MCF 10A (cell line): ENCODE measurements at regions of chr12 and their contacts with region 1.

Region 1: GRCh38 chr12:119988782-119989668 is at the start of gene BICDL1:
- DNase-seq: peak; percentile 93
- H3K4me3 Mint-ChIP-seq: peak within 1 kb of the TSS; percentile 75
- H3K27ac Mint-ChIP-seq: peak within 1 kb of the TSS; percentile 72
- H3K4me1 Mint-ChIP-seq: peaks cover 13% of the 10 kb centered on the region
- H3K27me3 Mint-ChIP-seq: peaks cover 2% of the 10 kb centered on the region
- CTCF ChIP-seq: no peak
- total RNA-seq, gene BICDL1: 18.4 and 20.7 TPM in 2 replicates

Region 2: GRCh38 chr12:119877639-119877948 is 111.4 kb before region 1 on chr12:
- CTCF ChIA-PET with region 1: no interaction called
- POLR2A ChIA-PET with region 1: no interaction called
- intact Hi-C with region 1: no loop called
- DNase-seq: no peak
- H3K4me3 Mint-ChIP-seq: peak overlapping the region; percentile 82
- H3K27ac Mint-ChIP-seq: peak overlapping the region; percentile 85
- H3K4me1 Mint-ChIP-seq: peaks cover 9% of the 10 kb centered on the region
- H3K27me3 Mint-ChIP-seq: no peaks in the 10 kb centered on the region
- CTCF ChIP-seq: no peak

Region 3: GRCh38 chr12:120012067-120012621 is 23.1 kb after region 1 on chr12:
- CTCF ChIA-PET with region 1: interaction called, 5 read pairs
- POLR2A ChIA-PET with region 1: interaction called, 25 read pairs
- intact Hi-C with region 1: no loop called
- DNase-seq: peak; percentile 7
- H3K4me3 Mint-ChIP-seq: no peak overlapping the region
- H3K27ac Mint-ChIP-seq: no peak overlapping the region
- H3K4me1 Mint-ChIP-seq: peaks cover 7% of the 10 kb centered on the region
- H3K27me3 Mint-ChIP-seq: no peaks in the 10 kb centered on the region
- CTCF ChIP-seq: no peak

Region 4: DNA sequence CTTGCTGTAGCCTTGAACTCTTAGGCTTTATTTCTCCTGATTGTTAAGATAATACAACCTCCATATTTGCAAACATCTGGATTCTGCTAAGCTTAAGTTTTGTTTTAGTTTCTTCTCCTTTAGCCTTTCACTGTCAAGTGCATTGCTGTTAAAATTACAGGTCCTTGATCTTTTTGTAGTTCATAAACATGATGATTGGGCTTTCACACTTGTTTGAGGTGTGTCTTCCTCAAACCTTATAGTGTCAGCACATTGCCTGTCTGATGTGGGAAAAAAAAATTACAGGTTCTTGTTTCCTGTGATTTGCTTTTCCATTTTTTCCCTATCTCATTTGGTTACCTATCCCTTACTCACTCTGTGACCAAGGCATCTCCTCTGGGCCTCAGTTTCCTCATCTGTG is 59.2 kb after region 1 on chr12:
- CTCF ChIA-PET with region 1: interaction called, 6 read pairs
- POLR2A ChIA-PET with region 1: interaction called, 27 read pairs
- intact Hi-C with region 1: no loop called
- DNase-seq: no peak
- H3K4me3 Mint-ChIP-seq: no peak overlapping the region
- H3K27ac Mint-ChIP-seq: no peak overlapping the region
- H3K4me1 Mint-ChIP-seq: peaks cover 16% of the 10 kb centered on the region
- H3K27me3 Mint-ChIP-seq: no peaks in the 10 kb centered on the region
- CTCF ChIP-seq: no peak

Region 5: GRCh38 chr12:120064054-120064940 is 75.3 kb after region 1 on chr12:
- CTCF ChIA-PET with region 1: interaction called, 4 read pairs
- POLR2A ChIA-PET with region 1: interaction called, 47 read pairs
- intact Hi-C with region 1: loop called (anchors 2 kb)
- DNase-seq: no peak
- H3K4me3 Mint-ChIP-seq: no peak overlapping the region
- H3K27ac Mint-ChIP-seq: no peak overlapping the region
- H3K4me1 Mint-ChIP-seq: peaks cover 29% of the 10 kb centered on the region
- H3K27me3 Mint-ChIP-seq: no peaks in the 10 kb centered on the region
- CTCF ChIP-seq: no peak

Region 6: GRCh38 chr12:120086801-120087621 is 98.0 kb after region 1 on chr12:
- CTCF ChIA-PET with region 1: interaction called, 10 read pairs
- POLR2A ChIA-PET with region 1: interaction called, 49 read pairs
- intact Hi-C with region 1: loop called (anchors 1 kb)
- DNase-seq: peak; percentile 98
- H3K4me3 Mint-ChIP-seq: peak overlapping the region; percentile 70
- H3K27ac Mint-ChIP-seq: peak overlapping the region; percentile 79
- H3K4me1 Mint-ChIP-seq: peaks cover 23% of the 10 kb centered on the region
- H3K27me3 Mint-ChIP-seq: no peaks in the 10 kb centered on the region
- CTCF ChIP-seq: peak; percentile 95